B cell (primary cell): ENCODE measurements at regions of chr21 and their contacts with region 1.

Region 1: GRCh38 chr21:34614633-34615486 is at the start of gene RCAN1:
- DNase-seq: peak; percentile 94
- ATAC-seq: peak; percentile 95
- H3K4me3 ChIP-seq: peak within 1 kb of the TSS; percentile 41 to 74 (median 59)
- H3K4me3 Mint-ChIP-seq: peak within 1 kb of the TSS; percentile 91
- H3K27ac ChIP-seq: peak within 1 kb of the TSS in 1 of 2 donors; percentile 71
- H3K27ac Mint-ChIP-seq: peak within 1 kb of the TSS; percentile 84
- H3K4me1 ChIP-seq: peaks cover 9 to 11% of the 10 kb centered on the region in 2 donors
- H3K4me1 Mint-ChIP-seq: peaks cover 16% of the 10 kb centered on the region
- H3K27me3 ChIP-seq: peaks cover 0 to 7% (median 0%) of the 10 kb centered on the region in 4 experiments
- H3K27me3 Mint-ChIP-seq: peaks cover 15% of the 10 kb centered on the region
- CTCF ChIP-seq: no peak
- total RNA-seq, gene RCAN1: 4.2 and 4.4 TPM in 2 replicates

Region 2: GRCh38 chr21:34061983-34062382 is 552.9 kb before region 1 on chr21:
- CTCF ChIA-PET with region 1: no interaction called
- POLR2A ChIA-PET with region 1: no interaction called
- intact Hi-C with region 1: loop called (anchors 2 kb)
- DNase-seq: peak; percentile 13
- ATAC-seq: peak; percentile 31
- H3K4me3 ChIP-seq: no peak overlapping the region
- H3K4me3 Mint-ChIP-seq: no peak overlapping the region
- H3K27ac ChIP-seq: no peak overlapping the region
- H3K27ac Mint-ChIP-seq: no peak overlapping the region
- H3K4me1 ChIP-seq: no peaks in the 10 kb centered on the region
- H3K4me1 Mint-ChIP-seq: no peaks in the 10 kb centered on the region
- H3K27me3 ChIP-seq: no peaks in the 10 kb centered on the region
- H3K27me3 Mint-ChIP-seq: no peaks in the 10 kb centered on the region
- CTCF ChIP-seq: no peak

Region 3: DNA sequence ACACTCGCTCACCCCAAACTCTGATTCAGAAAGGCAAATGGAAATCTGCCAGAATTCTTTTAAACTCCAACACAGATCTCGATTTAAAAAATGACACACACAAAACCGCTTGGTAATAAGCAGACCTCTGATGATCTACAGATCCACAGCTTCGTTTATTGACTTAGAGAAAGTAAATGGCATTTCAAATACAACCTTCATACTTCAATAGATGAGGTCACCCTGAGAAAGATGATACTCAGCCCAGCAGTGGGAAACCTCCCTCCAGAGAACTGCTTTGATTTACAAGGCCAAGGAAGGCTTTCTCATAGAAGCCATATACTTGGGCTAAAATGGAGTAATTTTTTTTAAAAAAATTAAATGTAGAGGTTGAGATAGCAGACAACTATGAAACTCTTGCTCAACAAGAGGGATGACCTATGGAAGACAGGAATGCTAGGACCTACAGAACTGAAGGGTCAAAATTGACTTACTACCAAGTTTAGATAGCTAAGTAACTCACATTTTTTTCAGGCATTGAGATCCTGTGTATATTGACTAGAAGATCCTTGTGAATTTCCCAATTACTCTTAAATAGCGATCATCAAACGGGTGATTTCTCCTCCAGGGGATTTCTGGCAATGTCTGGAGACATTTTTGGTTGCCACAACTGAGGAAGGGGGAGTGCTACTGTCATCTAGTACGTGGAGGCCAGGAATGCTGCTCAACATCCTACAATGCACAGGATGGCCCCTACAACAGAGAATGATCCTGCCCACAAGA is 197.8 kb after region 1 on chr21:
- CTCF ChIA-PET with region 1: no interaction called
- POLR2A ChIA-PET with region 1: no interaction called
- intact Hi-C with region 1: no loop called
- DNase-seq: no peak
- ATAC-seq: no peak
- H3K4me3 ChIP-seq: no peak overlapping the region
- H3K4me3 Mint-ChIP-seq: no peak overlapping the region
- H3K27ac ChIP-seq: no peak overlapping the region
- H3K27ac Mint-ChIP-seq: no peak overlapping the region
- H3K4me1 ChIP-seq: no peaks in the 10 kb centered on the region
- H3K4me1 Mint-ChIP-seq: peaks cover 13% of the 10 kb centered on the region
- H3K27me3 ChIP-seq: no peaks in the 10 kb centered on the region
- H3K27me3 Mint-ChIP-seq: no peaks in the 10 kb centered on the region
- CTCF ChIP-seq: no peak